ENCODE measurements at regions of chr3 and their contacts with region 1.

Region 1: GRCh38 chr3:159988617-159989271 is at the start of gene IL12A:
- DNase-seq: peak; percentile 85
- H3K4me3 Mint-ChIP-seq: peak within 1 kb of the TSS; percentile 57
- H3K27ac Mint-ChIP-seq: no peak within 1 kb of the TSS
- H3K4me1 Mint-ChIP-seq: peaks cover 14% of the 10 kb centered on the region
- H3K27me3 Mint-ChIP-seq: no peaks in the 10 kb centered on the region
- total RNA-seq, gene IL12A: not detected

Region 2: DNA sequence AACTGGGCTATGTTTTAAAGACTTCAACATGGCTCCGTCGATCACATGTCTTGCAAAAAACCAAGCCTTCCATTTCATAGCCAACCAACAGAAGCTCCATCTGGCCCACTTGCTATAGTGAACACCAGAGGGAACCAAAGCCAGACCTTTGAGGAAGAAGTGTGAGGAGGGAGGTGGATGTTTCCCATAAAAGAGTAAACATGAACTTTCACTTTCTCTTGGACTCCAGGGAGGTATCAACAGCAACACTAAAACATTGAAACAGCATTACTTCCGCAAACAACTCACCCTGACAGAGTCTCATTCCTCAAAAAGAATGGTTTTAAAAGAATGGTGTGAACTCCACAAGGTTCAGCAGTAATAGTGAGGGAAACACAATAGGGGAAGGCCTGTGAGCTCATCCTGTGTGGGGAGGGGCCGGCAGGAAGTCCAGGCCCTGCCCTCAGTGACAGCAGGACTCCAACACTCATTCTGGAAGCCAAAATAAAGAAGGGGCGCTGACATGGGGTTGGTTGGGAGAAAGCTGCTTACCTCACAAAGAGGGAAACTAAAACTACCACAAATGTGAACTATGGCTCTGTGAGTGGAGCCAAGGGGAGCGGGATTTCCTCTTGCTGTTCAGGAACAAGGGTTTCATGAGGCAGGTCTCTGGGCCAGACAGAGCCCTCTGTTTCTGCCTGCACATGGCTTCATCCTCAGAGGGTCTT is 59.2 kb before region 1 on chr3:
- CTCF ChIA-PET with region 1: interaction called, 5 read pairs
- intact Hi-C with region 1: loop called (anchors 5 kb)
- DNase-seq: peak; percentile 32
- H3K4me3 Mint-ChIP-seq: no peak overlapping the region
- H3K27ac Mint-ChIP-seq: no peak overlapping the region
- H3K4me1 Mint-ChIP-seq: no peaks in the 10 kb centered on the region
- H3K27me3 Mint-ChIP-seq: peaks cover 5% of the 10 kb centered on the region

Region 3: DNA sequence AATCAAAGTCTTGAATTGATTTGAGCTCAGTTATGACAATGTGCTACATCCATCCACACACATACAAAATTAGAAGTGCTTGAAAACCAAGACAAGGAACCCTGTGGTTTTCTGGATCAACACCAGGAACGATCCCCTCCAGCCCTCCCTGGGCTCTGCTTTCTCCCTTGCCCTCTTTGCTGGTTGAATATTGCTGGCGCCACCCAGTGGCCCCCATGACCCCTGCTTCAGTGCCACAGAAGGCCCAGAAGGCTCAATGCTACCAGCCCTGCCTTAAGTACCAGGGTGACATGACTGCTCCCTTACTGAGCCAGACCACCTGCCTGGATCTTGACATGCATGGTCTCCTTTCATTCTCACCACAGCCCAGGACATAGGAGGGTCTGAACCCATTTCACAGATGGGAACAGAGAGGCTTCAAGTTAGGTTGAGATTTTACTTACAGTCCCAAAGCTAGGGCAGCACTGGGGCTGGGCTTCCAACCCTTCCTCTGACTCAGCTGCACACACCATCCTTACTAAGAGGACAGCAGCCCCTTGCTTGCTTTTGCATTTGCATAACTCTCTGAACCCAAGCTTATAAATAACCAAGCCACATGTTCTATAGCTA is 14.9 kb after region 1 on chr3:
- CTCF ChIA-PET with region 1: interaction called, 97 read pairs
- intact Hi-C with region 1: loop called (anchors 1 kb)
- DNase-seq: peak; percentile 62
- H3K4me3 Mint-ChIP-seq: no peak overlapping the region
- H3K27ac Mint-ChIP-seq: no peak overlapping the region
- H3K4me1 Mint-ChIP-seq: no peaks in the 10 kb centered on the region
- H3K27me3 Mint-ChIP-seq: no peaks in the 10 kb centered on the region

Region 4: DNA sequence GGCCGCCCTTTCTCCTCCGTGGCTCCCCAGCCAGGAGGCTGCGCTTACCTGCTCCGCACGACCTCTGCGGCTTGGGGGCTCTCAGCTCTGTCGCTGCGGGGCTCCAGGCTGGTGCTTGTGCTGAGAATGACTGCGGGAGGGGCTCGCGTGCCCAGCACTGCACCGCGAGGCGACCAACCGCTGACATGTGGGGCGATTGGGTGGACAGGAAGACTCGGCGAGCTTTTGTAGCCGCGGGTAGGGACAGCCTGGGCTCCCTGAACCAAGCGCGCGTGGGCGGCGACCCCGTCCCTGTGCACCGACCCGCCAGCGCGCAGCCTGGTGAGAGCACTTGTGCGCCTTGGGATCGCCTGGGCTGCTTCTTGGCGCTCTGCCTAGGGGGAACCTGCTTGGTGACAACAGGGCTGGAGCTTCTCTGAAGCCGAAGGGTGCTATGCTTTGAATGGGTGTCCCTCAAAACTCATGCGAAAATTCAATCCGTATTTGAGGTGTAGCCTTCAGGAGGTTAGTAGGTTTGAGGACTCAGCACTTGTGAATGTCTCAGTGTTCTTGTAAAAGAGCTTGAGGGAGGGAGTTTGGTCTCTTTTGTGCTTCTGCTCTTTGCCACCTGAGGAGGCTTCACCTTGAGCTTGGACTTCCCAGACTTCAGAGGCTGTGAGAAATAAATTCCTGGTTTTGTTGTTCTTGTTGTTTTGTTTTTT is 50.3 kb after region 1 on chr3:
- CTCF ChIA-PET with region 1: no interaction called
- intact Hi-C with region 1: no loop called
- DNase-seq: no peak
- H3K4me3 Mint-ChIP-seq: no peak overlapping the region
- H3K27ac Mint-ChIP-seq: no peak overlapping the region
- H3K4me1 Mint-ChIP-seq: peaks cover 4% of the 10 kb centered on the region
- H3K27me3 Mint-ChIP-seq: peaks cover 38% of the 10 kb centered on the region

Region 5: GRCh38 chr3:160129459-160130061 is 140.8 kb after region 1 on chr3:
- CTCF ChIA-PET with region 1: interaction called, 6 read pairs
- intact Hi-C with region 1: loop called (anchors 5 kb)
- DNase-seq: no peak
- H3K4me3 Mint-ChIP-seq: no peak overlapping the region
- H3K27ac Mint-ChIP-seq: no peak overlapping the region
- H3K4me1 Mint-ChIP-seq: no peaks in the 10 kb centered on the region
- H3K27me3 Mint-ChIP-seq: peaks cover 6% of the 10 kb centered on the region

Region 6: GRCh38 chr3:160343132-160343531 is 354.4 kb after region 1 on chr3:
- CTCF ChIA-PET with region 1: no interaction called
- intact Hi-C with region 1: loop called (anchors 1 kb)
- DNase-seq: no peak
- H3K4me3 Mint-ChIP-seq: no peak overlapping the region
- H3K27ac Mint-ChIP-seq: no peak overlapping the region
- H3K4me1 Mint-ChIP-seq: no peaks in the 10 kb centered on the region
- H3K27me3 Mint-ChIP-seq: no peaks in the 10 kb centered on the region